ENCODE measurements at regions of chr2 and their contacts with region 1.

Region 1: DNA sequence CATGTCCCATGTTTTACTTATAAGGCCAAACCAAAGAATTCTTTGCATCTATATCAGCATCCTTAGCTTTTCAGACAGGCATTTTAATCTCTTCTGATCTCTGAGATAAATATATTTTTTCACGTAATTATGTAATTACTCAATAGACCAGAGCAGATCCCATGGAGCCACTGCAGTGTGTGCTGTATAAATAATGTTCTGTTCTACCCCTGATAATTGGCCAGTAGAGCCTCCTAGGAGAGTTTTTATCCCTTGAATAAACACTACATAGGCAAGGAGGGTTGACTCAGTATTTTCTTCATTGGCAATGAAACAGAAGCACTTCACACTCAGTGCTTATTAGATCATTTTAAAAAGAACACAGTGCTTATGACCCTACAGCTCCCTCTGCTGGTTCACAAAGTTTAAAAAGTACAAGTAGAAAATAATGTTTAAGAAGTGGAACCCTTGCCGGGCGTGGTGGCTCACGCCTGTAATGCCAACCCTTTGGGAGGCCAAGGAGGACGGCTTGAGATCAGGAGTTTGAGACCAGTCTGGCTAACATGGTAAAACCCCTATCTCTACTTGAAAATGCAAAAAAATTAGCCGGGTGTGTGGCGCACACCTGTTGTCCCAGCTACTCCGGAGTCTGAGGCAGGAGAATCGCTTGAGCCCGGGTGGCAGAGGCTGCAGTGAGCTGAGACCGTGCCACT is 91.9 kb downstream of the PPP1R1C start:
- DNase-seq: peak; percentile 10 to 80
- ATAC-seq: peak; percentile 84 to 88
- H3K4me3 ChIP-seq: no peak overlapping the region
- H3K27ac ChIP-seq: no peak overlapping the region
- H3K4me1 ChIP-seq: peaks cover 9% of the 10 kb centered on the region
- CTCF ChIP-seq: peak; percentile 88
- EP300 ChIP-seq: no peak
- POLR2A ChIP-seq: no peak
- RAD21 ChIP-seq: peak; percentile 80 to 87

Region 2: DNA sequence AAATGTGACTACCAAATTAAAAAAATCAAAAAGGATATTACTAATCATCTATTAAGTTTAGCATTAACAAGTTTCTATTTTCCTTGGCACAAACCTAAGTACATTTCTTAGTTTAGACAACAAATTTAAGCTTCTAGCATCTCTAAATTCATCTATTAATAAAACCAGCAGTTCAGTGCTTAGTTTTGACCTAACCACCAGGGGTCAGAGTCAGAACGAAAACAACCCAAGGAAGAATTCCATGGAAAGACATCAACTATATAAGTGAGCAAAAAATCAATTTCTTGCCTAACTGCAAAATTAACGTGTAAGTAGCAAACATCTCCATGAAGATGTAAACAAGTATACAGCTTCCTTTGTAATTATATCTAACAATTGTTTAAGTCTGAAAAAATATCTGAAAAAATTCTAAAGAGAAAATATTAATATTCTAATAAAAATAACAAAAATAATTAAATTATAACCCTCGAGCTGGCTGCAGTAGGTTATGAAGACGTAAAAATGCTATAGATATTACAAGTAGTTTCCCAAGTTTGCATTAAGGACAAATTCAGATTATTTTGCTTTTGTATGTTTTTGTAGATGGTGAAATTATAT is 504.4 kb before region 1 on chr2:
- CTCF ChIA-PET with region 1: interaction called, 23 read pairs
- POLR2A ChIA-PET with region 1: no interaction called
- DNase-seq: peak; percentile 13 to 40
- ATAC-seq: peak in 1 of 2 experiments; percentile 72; a peak in 3 of 6 replicates
- H3K4me3 ChIP-seq: no peak overlapping the region
- H3K27ac ChIP-seq: no peak overlapping the region
- H3K4me1 ChIP-seq: no peaks in the 10 kb centered on the region
- CTCF ChIP-seq: peak; percentile 73
- EP300 ChIP-seq: no peak
- POLR2A ChIP-seq: no peak
- RAD21 ChIP-seq: peak; percentile 79 to 80

Region 3: GRCh38 chr2:181742922-181743722 is 334.5 kb before region 1 on chr2:
- CTCF ChIA-PET with region 1: interaction called, 15 read pairs
- POLR2A ChIA-PET with region 1: no interaction called
- DNase-seq: peak; percentile 7 to 65
- ATAC-seq: peak; percentile 54 to 67; a peak in 2 of 6 replicates
- H3K4me3 ChIP-seq: no peak overlapping the region
- H3K27ac ChIP-seq: 0 out of 6 replicates have a peak overlapping the region, but pooled peaks of 1 of the 2 experiments have one; percentile 29
- H3K4me1 ChIP-seq: peaks cover 9% of the 10 kb centered on the region; the same call in 2 of the 3 replicates
- CTCF ChIP-seq: peak; percentile 84
- EP300 ChIP-seq: no peak
- POLR2A ChIP-seq: no peak
- RAD21 ChIP-seq: peak; percentile 87 to 93

Region 4: GRCh38 chr2:182064019-182064778 is 13.4 kb before region 1 on chr2:
- CTCF ChIA-PET with region 1: interaction called, 10 read pairs
- POLR2A ChIA-PET with region 1: no interaction called
- DNase-seq: no peak
- ATAC-seq: no peak
- H3K4me3 ChIP-seq: no peak overlapping the region
- H3K27ac ChIP-seq: no peak overlapping the region
- H3K4me1 ChIP-seq: 0 out of 3 replicates have a peak, but pooled peaks cover 3% of the 10 kb centered on the region
- CTCF ChIP-seq: no peak
- EP300 ChIP-seq: no peak
- POLR2A ChIP-seq: no peak
- RAD21 ChIP-seq: no peak

Region 5: GRCh38 chr2:182088681-182089320 is 11.2 kb after region 1 on chr2:
- CTCF ChIA-PET with region 1: interaction called, 17 read pairs
- POLR2A ChIA-PET with region 1: no interaction called
- DNase-seq: no peak
- ATAC-seq: no peak
- H3K4me3 ChIP-seq: no peak overlapping the region
- H3K27ac ChIP-seq: no peak overlapping the region
- H3K4me1 ChIP-seq: no peaks in the 10 kb centered on the region
- CTCF ChIP-seq: no peak
- EP300 ChIP-seq: no peak
- POLR2A ChIP-seq: no peak
- RAD21 ChIP-seq: no peak

Measured in A549 (cell line).